GM12878 (cell line): ENCODE measurements at regions of chr7 and their contacts with region 1.

Region 1: GRCh38 chr7:100215895-100216294 is 3.9 kb upstream of the PVRIG start:
- DNase-seq: no peak
- ATAC-seq: no peak
- H3K4me3 ChIP-seq: no peak overlapping the region
- H3K27ac ChIP-seq: no peak overlapping the region
- H3K4me1 ChIP-seq: peaks cover 64% of the 10 kb centered on the region
- H3K27me3 ChIP-seq: no peaks in the 10 kb centered on the region
- CTCF ChIP-seq: no peak
- EP300 ChIP-seq: no peak
- POLR2A ChIP-seq: no peak
- RAD21 ChIP-seq: no peak

Region 2: GRCh38 chr7:99218406-99219184 is 997.3 kb before region 1 on chr7:
- CTCF ChIA-PET with region 1: no interaction called
- POLR2A ChIA-PET with region 1: no interaction called
- RAD21 ChIA-PET with region 1: no interaction called
- SMC1A ChIA-PET with region 1: no interaction called
- in situ Hi-C with region 1: no loop called
- intact Hi-C with region 1: no loop called
- DNase-seq: no peak
- ATAC-seq: no peak
- H3K4me3 ChIP-seq: no peak overlapping the region
- H3K27ac ChIP-seq: no peak overlapping the region
- H3K4me1 ChIP-seq: no peaks in the 10 kb centered on the region
- H3K27me3 ChIP-seq: no peaks in the 10 kb centered on the region; a peak in 1 of 4 replicates
- CTCF ChIP-seq: no peak
- EP300 ChIP-seq: no peak
- POLR2A ChIP-seq: no peak
- RAD21 ChIP-seq: no peak

Region 3: GRCh38 chr7:100177045-100178001 is 38.6 kb before region 1 on chr7 and contains the starts of genes GPC2 and STAG3:
- CTCF ChIA-PET with region 1: interaction called, 5 read pairs
- POLR2A ChIA-PET with region 1: no interaction called
- RAD21 ChIA-PET with region 1: interaction called, 5 read pairs
- SMC1A ChIA-PET with region 1: interaction called, 3 read pairs
- in situ Hi-C with region 1: no loop called
- intact Hi-C with region 1: loop called (anchors 5 kb)
- DNase-seq: peak; percentile 76
- ATAC-seq: peak; percentile 99
- H3K4me3 ChIP-seq: peak within 1 kb of the TSS; percentile 85
- H3K27ac ChIP-seq: no peak within 1 kb of the TSS
- H3K4me1 ChIP-seq: peaks cover 7% of the 10 kb centered on the region
- H3K27me3 ChIP-seq: no peaks in the 10 kb centered on the region
- CTCF ChIP-seq: no peak
- EP300 ChIP-seq: no peak
- POLR2A ChIP-seq: no peak
- RAD21 ChIP-seq: no peak
- polyA plus RNA-seq, gene GPC2: 0.19 to 0.24 TPM
- polyA plus RNA-seq, gene STAG3: 281 to 306 TPM

Region 4: GRCh38 chr7:100195222-100195621 is 20.7 kb before region 1 on chr7:
- CTCF ChIA-PET with region 1: interaction called, 113 read pairs
- POLR2A ChIA-PET with region 1: interaction called, 86 read pairs
- RAD21 ChIA-PET with region 1: interaction called, 35 read pairs
- SMC1A ChIA-PET with region 1: interaction called, 140 read pairs
- in situ Hi-C with region 1: no loop called
- intact Hi-C with region 1: loop called (anchors 2 kb)
- DNase-seq: no peak
- ATAC-seq: no peak
- H3K4me3 ChIP-seq: no peak overlapping the region
- H3K27ac ChIP-seq: peak overlapping the region; percentile 40; the same call in 1 of the 2 replicates
- H3K4me1 ChIP-seq: peaks cover 49% of the 10 kb centered on the region
- H3K27me3 ChIP-seq: no peaks in the 10 kb centered on the region
- CTCF ChIP-seq: no peak
- EP300 ChIP-seq: no peak
- POLR2A ChIP-seq: no peak
- RAD21 ChIP-seq: no peak

Region 5: DNA sequence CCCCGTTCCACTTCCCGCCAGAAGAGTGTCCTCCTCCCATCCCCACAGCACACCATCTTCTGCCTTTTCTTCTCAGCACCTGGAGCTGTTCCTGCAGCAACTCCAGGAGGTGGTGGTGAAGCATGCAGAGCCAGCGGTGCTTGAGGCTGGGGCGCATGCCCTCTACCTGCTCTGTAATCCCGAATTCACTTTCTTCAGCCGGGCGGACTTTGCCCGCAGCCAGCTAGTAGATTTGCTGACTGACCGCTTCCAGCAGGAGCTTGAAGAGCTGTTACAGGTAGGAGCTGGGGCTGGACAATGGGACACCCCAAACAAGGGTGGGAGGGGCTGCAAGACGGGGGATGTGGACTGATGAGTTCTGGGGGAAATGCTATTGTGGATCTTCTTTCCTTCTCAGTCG is 15.2 kb before region 1 on chr7:
- CTCF ChIA-PET with region 1: interaction called, 65 read pairs
- POLR2A ChIA-PET with region 1: interaction called, 86 read pairs
- RAD21 ChIA-PET with region 1: interaction called, 33 read pairs
- SMC1A ChIA-PET with region 1: interaction called, 112 read pairs
- in situ Hi-C with region 1: no loop called
- intact Hi-C with region 1: no loop called
- DNase-seq: no peak
- ATAC-seq: no peak
- H3K4me3 ChIP-seq: no peak overlapping the region
- H3K27ac ChIP-seq: no peak overlapping the region
- H3K4me1 ChIP-seq: peaks cover 25% of the 10 kb centered on the region
- H3K27me3 ChIP-seq: no peaks in the 10 kb centered on the region
- CTCF ChIP-seq: no peak
- EP300 ChIP-seq: no peak
- POLR2A ChIP-seq: no peak
- RAD21 ChIP-seq: no peak

Region 6: DNA sequence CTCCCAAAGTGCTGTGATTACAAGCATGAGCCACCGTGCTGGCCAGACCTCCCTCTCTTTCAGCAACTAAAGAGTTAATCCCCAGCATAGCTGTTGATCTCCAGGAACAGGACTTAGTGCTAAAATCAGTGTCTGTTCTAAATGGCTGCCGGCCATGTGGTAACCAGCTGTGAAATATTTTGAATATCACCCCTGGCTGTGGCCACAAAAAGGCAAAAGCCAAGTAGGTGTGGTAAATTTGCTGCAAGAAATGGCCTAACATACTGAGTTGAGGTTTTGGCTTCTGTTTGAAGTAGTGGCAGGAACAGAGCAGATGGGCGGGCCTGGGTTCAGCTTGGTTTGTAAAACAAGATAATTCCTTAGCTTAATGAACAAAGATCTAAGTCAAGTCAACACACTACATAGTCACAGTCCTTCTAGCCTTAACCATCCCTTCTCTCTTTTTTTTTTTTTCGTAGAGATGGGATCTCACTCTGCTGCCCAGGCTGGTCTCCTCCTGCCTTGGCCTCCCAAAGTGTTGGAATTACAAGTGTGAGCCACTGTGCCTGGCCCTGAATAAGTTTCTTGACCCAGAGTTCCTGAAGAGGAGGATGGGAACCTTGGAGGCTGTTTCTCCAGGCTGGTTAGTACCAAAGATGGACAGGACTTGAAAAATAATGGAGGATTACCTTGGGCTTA is 300.4 kb after region 1 on chr7:
- CTCF ChIA-PET with region 1: no interaction called
- POLR2A ChIA-PET with region 1: no interaction called
- RAD21 ChIA-PET with region 1: no interaction called
- SMC1A ChIA-PET with region 1: no interaction called
- in situ Hi-C with region 1: no loop called
- intact Hi-C with region 1: no loop called
- DNase-seq: peak; percentile 66
- ATAC-seq: peak; percentile 98
- H3K4me3 ChIP-seq: no peak overlapping the region
- H3K27ac ChIP-seq: peak overlapping the region; percentile 38
- H3K4me1 ChIP-seq: peaks cover 25% of the 10 kb centered on the region
- H3K27me3 ChIP-seq: no peaks in the 10 kb centered on the region
- CTCF ChIP-seq: no peak
- EP300 ChIP-seq: peak in 1 of 2 experiments; percentile 55; a peak in 1 of 4 replicates
- POLR2A ChIP-seq: no peak
- RAD21 ChIP-seq: no peak